Heart left ventricle (tissue), 16 donors: ENCODE measurements at regions of chr11 and their contacts with region 1.

Region 1: GRCh38 chr11:126115816-126116331 is 53.2 kb upstream of the CDON start:
- DNase-seq: peak in 4 of 5 donors; percentile 48 to 82 (median 68)
- ATAC-seq: peak; percentile 64 to 79 (median 76)
- H3K4me3 ChIP-seq: no peak overlapping the region
- H3K27ac ChIP-seq: peak overlapping the region; percentile 60 to 89 (median 80)
- H3K4me1 ChIP-seq: peaks cover 3 to 59% (median 44%) of the 10 kb centered on the region in 12 donors
- H3K27me3 ChIP-seq: no peaks in the 10 kb centered on the region
- CTCF ChIP-seq: peak in 6 of 12 donors; percentile 6 to 41 (median 20)
- POLR2A ChIP-seq: no peak

Region 2: DNA sequence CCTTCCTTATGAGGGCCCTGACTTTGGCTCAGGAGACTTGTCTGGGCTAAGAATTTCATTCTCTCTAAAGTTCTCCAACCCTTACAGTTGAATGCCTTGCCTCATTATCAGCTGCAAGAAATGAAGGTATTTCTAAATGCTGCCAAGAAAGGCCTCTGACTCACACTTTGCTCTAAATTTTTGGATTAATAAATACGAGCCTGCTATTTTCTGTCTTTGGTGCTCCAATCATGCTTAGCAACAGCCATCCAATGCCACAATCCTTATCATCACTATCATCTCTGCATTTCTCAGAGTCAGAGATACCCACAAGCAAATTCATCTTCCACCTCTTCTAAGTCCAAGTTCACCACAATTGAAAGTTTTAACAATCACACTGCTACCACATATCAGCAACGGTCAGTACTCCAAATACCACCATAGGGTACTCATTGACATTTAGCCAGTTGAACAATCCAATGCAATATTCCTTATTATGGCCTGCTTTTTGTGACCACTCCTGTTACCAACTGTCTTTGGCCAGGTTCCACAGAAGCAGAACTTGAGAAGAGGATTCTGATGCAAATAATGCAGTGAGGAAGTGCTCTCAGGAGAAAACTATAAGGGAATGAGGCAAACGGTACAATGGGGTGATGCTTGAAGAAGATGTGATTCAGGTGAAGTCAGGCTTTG is 342.9 kb before region 1 on chr11:
- intact Hi-C with region 1: no loop called
- DNase-seq: no peak
- ATAC-seq: peak in 2 of 4 donors; percentile 51 to 59
- H3K4me3 ChIP-seq: no peak overlapping the region
- H3K27ac ChIP-seq: no peak overlapping the region
- H3K4me1 ChIP-seq: no peaks in the 10 kb centered on the region
- H3K27me3 ChIP-seq: peaks cover 0 to 5% (median 0%) of the 10 kb centered on the region in 9 donors
- CTCF ChIP-seq: no peak
- POLR2A ChIP-seq: no peak

Region 3: GRCh38 chr11:126138636-126139035 is 22.8 kb after region 1 on chr11:
- intact Hi-C with region 1: loop called in 1 of 10 experiments (anchors 1 kb)
- DNase-seq: peak in 1 of 5 donors; percentile 35
- ATAC-seq: peak in 1 of 4 donors; percentile 47
- H3K4me3 ChIP-seq: no peak overlapping the region
- H3K27ac ChIP-seq: peak overlapping the region in 1 of 12 donors; percentile 81
- H3K4me1 ChIP-seq: peaks cover 0 to 56% (median 27%) of the 10 kb centered on the region in 12 donors
- H3K27me3 ChIP-seq: peaks cover 0 to 4% (median 0%) of the 10 kb centered on the region in 9 donors
- CTCF ChIP-seq: no peak
- POLR2A ChIP-seq: no peak